ENCODE measurements at regions of chr1 and their contacts with region 1.

Region 1: DNA sequence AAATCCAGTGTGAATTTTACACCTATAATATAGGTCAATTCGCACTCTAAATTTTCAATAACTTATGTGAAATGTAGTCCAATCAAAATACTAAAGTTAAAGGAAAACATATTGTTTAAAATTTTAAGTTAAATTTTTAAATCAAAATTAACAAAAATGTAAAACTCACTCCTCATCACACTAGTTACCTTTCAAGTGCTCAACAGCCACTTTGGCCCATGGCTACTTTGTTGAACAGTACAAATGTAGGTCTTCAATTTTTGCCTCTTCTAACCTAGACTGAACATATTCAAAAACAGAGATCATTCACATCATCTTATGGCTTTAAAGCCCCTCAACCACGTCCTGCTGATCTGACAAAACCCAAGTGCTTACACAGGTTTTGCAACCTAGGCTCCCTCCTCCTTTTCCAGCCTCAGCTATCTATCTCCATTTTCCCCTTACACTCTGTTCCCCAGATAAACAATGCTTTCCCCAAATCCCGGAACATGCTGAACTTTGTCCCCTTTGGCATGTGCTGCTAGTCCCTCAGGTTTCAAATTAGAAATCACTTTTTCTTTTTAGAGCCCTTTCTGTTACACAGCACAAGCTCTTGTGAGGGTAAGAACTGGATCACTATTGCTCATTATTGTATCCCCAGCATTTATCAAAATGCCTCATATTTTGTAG is 110.6 kb downstream of the AKT3 start:
- DNase-seq: peak; percentile 1
- ATAC-seq: no peak; the same call in 2 of the 3 replicates
- H3K4me3 ChIP-seq: no peak overlapping the region
- H3K27ac ChIP-seq: no peak overlapping the region
- H3K4me1 ChIP-seq: peaks cover 10% of the 10 kb centered on the region
- H3K27me3 ChIP-seq: no peaks in the 10 kb centered on the region
- CTCF ChIP-seq: no peak
- EP300 ChIP-seq: no peak
- POLR2A ChIP-seq: no peak
- RAD21 ChIP-seq: no peak

Region 2: DNA sequence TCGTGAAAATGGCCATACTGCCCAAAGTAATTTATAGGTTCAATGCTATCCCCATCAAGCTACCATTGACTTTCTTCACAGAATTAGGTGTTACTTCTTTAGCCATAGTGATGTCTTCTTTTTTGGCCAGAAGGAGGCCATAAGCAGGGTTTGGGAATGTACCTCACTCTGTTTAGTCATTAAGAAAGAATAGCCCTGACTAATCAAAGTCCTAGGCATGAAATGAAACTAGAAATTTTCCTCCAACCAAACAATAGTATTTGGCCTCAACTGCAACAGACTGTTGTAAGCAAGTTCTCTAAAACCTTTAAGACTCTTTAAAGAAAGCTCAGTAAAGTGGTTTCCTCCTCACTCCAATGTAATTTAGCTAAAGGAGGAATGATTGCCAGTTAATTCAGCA is 53.3 kb before region 1 on chr1:
- CTCF ChIA-PET with region 1: no interaction called
- POLR2A ChIA-PET with region 1: no interaction called
- in situ Hi-C with region 1: no loop called
- intact Hi-C with region 1: loop called (anchors 1 kb)
- DNase-seq: no peak
- ATAC-seq: no peak
- H3K4me3 ChIP-seq: no peak overlapping the region
- H3K27ac ChIP-seq: no peak overlapping the region
- H3K4me1 ChIP-seq: no peaks in the 10 kb centered on the region
- H3K27me3 ChIP-seq: no peaks in the 10 kb centered on the region
- CTCF ChIP-seq: no peak
- EP300 ChIP-seq: no peak
- POLR2A ChIP-seq: no peak
- RAD21 ChIP-seq: no peak

Region 3: DNA sequence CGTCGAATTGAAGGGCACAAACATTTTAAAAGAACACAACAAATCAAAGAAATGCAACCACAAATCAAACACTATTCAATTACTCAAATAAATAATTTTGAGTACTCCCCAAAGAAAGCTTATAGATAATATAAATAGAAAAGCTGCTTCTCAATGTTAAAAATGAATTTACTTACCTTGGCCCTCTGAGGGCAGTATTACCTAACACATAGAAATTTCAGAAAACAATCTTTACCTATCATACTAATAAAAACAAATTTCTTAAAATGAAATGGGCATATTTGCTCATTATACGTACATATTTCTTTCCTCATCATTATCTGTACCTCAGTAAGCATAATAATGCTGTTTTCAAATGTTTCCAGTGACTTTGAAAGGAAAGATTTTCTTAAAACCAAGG is 31.3 kb before region 1 on chr1:
- CTCF ChIA-PET with region 1: no interaction called
- POLR2A ChIA-PET with region 1: no interaction called
- in situ Hi-C with region 1: no loop called
- intact Hi-C with region 1: no loop called
- DNase-seq: no peak
- ATAC-seq: no peak
- H3K4me3 ChIP-seq: no peak overlapping the region
- H3K27ac ChIP-seq: no peak overlapping the region
- H3K4me1 ChIP-seq: peaks cover 8% of the 10 kb centered on the region
- H3K27me3 ChIP-seq: no peaks in the 10 kb centered on the region
- CTCF ChIP-seq: no peak
- EP300 ChIP-seq: no peak
- POLR2A ChIP-seq: no peak
- RAD21 ChIP-seq: no peak

Measured in HepG2 (cell line).